ENCODE measurements at regions of chr14 and their contacts with region 1.

Region 1: DNA sequence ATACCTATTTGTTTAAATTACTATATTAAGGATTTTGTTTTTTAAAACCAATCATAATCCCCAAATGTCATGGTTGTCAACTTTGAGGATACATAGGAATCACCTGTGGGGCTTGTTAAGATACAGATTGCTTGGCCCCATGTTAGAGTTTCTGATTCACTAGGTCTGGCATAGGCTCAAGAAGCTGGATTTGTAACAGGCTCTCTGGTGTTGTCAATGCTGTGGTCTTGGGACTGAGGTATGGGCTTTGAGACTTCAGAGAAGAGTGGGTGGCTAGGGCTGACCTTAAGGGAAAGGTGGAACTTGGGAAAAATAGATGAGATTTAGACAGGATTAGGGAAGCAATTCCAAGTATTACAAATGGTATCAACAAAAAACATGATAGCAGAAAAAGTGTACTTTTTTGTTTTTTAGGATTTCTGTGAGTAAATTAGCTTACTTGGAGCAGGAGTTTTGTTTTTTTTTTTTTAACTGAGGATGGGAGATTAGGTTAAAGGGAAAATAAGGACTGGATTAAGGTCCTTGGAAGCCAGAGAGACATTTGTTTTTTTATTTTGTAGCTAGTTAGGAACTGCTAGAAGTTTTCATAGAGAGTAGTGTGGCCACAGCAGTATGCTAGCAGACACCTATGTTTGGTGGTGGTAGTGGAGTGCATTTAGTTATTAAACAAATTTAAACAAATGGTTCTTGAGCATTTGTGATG is 88.6 kb downstream of the RAD51B start:
- DNase-seq: no peak
- ATAC-seq: no peak

Region 2: GRCh38 chr14:67856814-67857213 is 51.4 kb before region 1 on chr14:
- intact Hi-C with region 1: loop called in 1 of 2 experiments (anchors 10 kb)
- DNase-seq: no peak
- ATAC-seq: peak; percentile 70

Measured in left colon (tissue), 2 donors.